WTC11 (cell line): ENCODE measurements at regions of chr10 and their contacts with region 1.

Region 1: GRCh38 chr10:114470956-114471905 is 66.9 kb upstream of the AFAP1L2 start:
- DNase-seq: peak; percentile 71
- ATAC-seq: peak; percentile 51
- H3K4me3 Mint-ChIP-seq: no peak overlapping the region
- H3K27ac Mint-ChIP-seq: no peak overlapping the region
- H3K4me1 Mint-ChIP-seq: peaks cover 26% of the 10 kb centered on the region
- H3K27me3 Mint-ChIP-seq: no peaks in the 10 kb centered on the region
- CTCF ChIP-seq: peak; percentile 77

Region 2: GRCh38 chr10:114346271-114347031 is 124.8 kb before region 1 on chr10:
- CTCF ChIA-PET with region 1: no interaction called
- POLR2A ChIA-PET with region 1: no interaction called
- DNase-seq: no peak
- ATAC-seq: no peak
- H3K4me3 Mint-ChIP-seq: no peak overlapping the region
- H3K27ac Mint-ChIP-seq: no peak overlapping the region; the same call in 1 of the 2 replicates
- H3K4me1 Mint-ChIP-seq: peaks cover 34% of the 10 kb centered on the region
- H3K27me3 Mint-ChIP-seq: no peaks in the 10 kb centered on the region
- CTCF ChIP-seq: no peak

Region 3: GRCh38 chr10:114458955-114459354 is 12.3 kb before region 1 on chr10:
- CTCF ChIA-PET with region 1: interaction called, 38 read pairs
- POLR2A ChIA-PET with region 1: no interaction called
- DNase-seq: peak; percentile 78
- ATAC-seq: peak; percentile 99
- H3K4me3 Mint-ChIP-seq: no peak overlapping the region
- H3K27ac Mint-ChIP-seq: no peak overlapping the region
- H3K4me1 Mint-ChIP-seq: no peaks in the 10 kb centered on the region
- H3K27me3 Mint-ChIP-seq: no peaks in the 10 kb centered on the region
- CTCF ChIP-seq: peak; percentile 71

Region 4: GRCh38 chr10:114486938-114487814 is 15.9 kb after region 1 on chr10:
- CTCF ChIA-PET with region 1: interaction called, 19 read pairs
- POLR2A ChIA-PET with region 1: no interaction called
- DNase-seq: no peak
- ATAC-seq: no peak
- H3K4me3 Mint-ChIP-seq: no peak overlapping the region
- H3K27ac Mint-ChIP-seq: peak overlapping the region; percentile 79; the same call in 1 of the 2 replicates
- H3K4me1 Mint-ChIP-seq: peaks cover 39% of the 10 kb centered on the region
- H3K27me3 Mint-ChIP-seq: no peaks in the 10 kb centered on the region; the same call in 1 of the 2 replicates
- CTCF ChIP-seq: no peak

Region 5: GRCh38 chr10:114507449-114507848 is 36.2 kb after region 1 on chr10:
- CTCF ChIA-PET with region 1: no interaction called
- POLR2A ChIA-PET with region 1: no interaction called
- DNase-seq: no peak
- ATAC-seq: peak; percentile 59
- H3K4me3 Mint-ChIP-seq: no peak overlapping the region
- H3K27ac Mint-ChIP-seq: peak overlapping the region; percentile 53; the same call in 1 of the 2 replicates
- H3K4me1 Mint-ChIP-seq: peaks cover 29% of the 10 kb centered on the region
- H3K27me3 Mint-ChIP-seq: no peaks in the 10 kb centered on the region
- CTCF ChIP-seq: no peak

Region 6: GRCh38 chr10:114538181-114538906 is 67.1 kb after region 1 on chr10:
- CTCF ChIA-PET with region 1: interaction called, 20 read pairs
- POLR2A ChIA-PET with region 1: no interaction called
- DNase-seq: peak; percentile 48
- ATAC-seq: peak; percentile 77
- H3K4me3 Mint-ChIP-seq: peak overlapping the region; percentile 34
- H3K27ac Mint-ChIP-seq: no peak overlapping the region
- H3K4me1 Mint-ChIP-seq: peaks cover 32% of the 10 kb centered on the region
- H3K27me3 Mint-ChIP-seq: peaks cover 23% of the 10 kb centered on the region
- CTCF ChIP-seq: no peak

Region 7: DNA sequence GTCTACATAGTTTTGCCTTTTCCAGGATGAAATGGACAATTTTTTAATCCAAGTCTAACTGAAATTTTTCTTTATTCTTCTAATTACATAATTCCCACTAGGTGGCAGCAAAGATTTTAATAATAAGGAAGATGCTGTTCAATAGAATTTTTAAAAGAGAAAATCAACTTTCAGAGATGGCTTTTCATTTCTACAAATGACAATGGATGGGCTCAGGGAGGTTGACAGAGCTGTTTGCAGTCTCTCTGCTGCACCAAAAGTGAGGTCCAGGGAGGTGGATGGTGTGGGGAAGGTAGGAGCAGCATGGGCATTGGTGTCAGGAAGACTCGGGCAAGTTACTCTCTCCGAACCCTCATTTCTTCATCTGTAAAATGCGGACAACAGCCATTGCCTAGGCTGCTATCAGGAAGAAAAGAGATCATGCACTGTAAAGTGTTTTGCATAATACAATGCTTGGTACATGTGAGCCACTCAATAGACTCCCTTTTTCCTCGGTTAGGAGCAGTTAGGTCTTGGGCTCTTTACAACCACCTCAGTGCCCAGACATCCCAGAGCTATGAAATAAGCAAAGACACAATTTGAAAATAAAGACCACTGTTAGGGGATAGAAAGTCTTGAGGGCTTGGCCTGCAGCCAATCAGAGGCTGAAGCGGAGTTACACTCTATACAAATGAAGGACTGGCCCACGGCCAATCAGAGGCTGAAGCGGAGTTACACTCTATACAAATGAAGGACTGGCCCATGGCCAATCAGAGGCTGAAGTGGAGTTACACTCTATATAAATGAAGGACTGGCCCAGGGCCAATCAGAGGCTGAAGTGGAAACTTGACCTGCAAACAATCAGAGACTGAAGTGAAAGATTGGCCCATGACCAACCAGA is 79.8 kb after region 1 on chr10:
- CTCF ChIA-PET with region 1: interaction called, 73 read pairs
- POLR2A ChIA-PET with region 1: interaction called, 5 read pairs
- DNase-seq: no peak
- ATAC-seq: peak; percentile 65
- H3K4me3 Mint-ChIP-seq: no peak overlapping the region
- H3K27ac Mint-ChIP-seq: no peak overlapping the region
- H3K4me1 Mint-ChIP-seq: no peaks in the 10 kb centered on the region
- H3K27me3 Mint-ChIP-seq: no peaks in the 10 kb centered on the region
- CTCF ChIP-seq: peak; percentile 29; the same call in 1 of the 2 replicates

Region 8: DNA sequence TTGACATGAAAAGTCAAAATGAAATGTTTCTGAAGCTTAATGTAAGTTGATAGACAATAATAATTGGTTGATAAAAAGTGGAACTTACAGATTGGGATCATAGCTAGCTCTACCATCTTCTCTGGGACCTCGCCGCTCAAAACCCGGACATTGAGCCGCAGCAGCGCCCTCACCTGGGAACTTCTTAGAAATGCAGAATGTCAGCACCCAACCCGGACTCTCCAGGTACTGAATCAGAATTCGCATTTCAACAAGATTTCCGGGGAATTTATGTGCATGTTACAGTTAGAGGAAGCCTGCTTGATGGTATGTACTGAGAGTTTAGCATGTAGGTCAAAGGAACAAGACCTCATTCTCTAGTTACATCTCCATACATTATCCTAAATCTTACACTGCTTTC is 223.5 kb after region 1 on chr10:
- CTCF ChIA-PET with region 1: interaction called, 30 read pairs
- POLR2A ChIA-PET with region 1: no interaction called
- DNase-seq: peak; percentile 71
- ATAC-seq: peak; percentile 88
- H3K4me3 Mint-ChIP-seq: no peak overlapping the region
- H3K27ac Mint-ChIP-seq: no peak overlapping the region
- H3K4me1 Mint-ChIP-seq: peaks cover 25% of the 10 kb centered on the region
- H3K27me3 Mint-ChIP-seq: no peaks in the 10 kb centered on the region
- CTCF ChIP-seq: peak; percentile 64

Region 9: DNA sequence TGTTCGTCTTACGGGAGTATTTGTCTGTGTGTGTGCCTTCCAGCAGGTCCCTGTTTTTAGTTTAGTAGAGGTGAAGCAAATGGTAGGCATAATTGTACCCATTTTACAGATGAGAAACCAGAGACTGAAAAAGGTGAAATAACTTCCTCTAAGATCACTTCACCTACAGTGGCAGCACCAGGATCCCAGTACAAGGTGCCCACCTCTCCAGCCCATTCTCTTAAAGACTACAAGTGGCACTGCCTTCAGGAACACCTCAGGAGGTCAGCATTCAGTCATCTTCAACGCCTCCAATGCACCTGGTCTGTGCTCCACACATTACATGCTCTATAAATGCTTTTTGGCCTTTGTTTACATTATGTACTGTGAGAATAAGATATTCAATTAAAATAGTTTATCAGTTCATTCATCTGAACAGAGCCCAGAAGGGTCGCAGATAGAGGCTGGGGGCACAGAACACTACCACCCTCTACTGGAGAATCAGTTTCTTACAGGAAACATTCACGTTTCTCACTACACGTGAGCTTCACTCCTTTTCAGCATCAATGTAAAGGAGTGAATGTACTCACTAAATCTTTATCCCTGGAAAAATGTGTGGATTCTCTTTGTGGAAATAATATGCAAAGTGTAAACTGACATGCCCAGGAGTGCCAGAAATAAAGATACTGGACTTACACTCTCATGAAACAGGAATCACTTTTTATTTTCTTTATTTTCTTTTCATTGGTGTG is 232.3 kb after region 1 on chr10:
- CTCF ChIA-PET with region 1: interaction called, 21 read pairs
- POLR2A ChIA-PET with region 1: no interaction called
- DNase-seq: no peak
- ATAC-seq: peak; percentile 93
- H3K4me3 Mint-ChIP-seq: no peak overlapping the region
- H3K27ac Mint-ChIP-seq: no peak overlapping the region
- H3K4me1 Mint-ChIP-seq: peaks cover 6% of the 10 kb centered on the region; the same call in 1 of the 2 replicates
- H3K27me3 Mint-ChIP-seq: peaks cover 3% of the 10 kb centered on the region
- CTCF ChIP-seq: peak; percentile 62

Region 10: GRCh38 chr10:114719311-114719710 is 248.1 kb after region 1 on chr10:
- CTCF ChIA-PET with region 1: no interaction called
- POLR2A ChIA-PET with region 1: no interaction called
- DNase-seq: no peak
- ATAC-seq: no peak
- H3K4me3 Mint-ChIP-seq: no peak overlapping the region
- H3K27ac Mint-ChIP-seq: no peak overlapping the region
- H3K4me1 Mint-ChIP-seq: peaks cover 27% of the 10 kb centered on the region
- H3K27me3 Mint-ChIP-seq: no peaks in the 10 kb centered on the region
- CTCF ChIP-seq: no peak